ENCODE measurements at regions of chr2 and their contacts with region 1.

Region 1: DNA sequence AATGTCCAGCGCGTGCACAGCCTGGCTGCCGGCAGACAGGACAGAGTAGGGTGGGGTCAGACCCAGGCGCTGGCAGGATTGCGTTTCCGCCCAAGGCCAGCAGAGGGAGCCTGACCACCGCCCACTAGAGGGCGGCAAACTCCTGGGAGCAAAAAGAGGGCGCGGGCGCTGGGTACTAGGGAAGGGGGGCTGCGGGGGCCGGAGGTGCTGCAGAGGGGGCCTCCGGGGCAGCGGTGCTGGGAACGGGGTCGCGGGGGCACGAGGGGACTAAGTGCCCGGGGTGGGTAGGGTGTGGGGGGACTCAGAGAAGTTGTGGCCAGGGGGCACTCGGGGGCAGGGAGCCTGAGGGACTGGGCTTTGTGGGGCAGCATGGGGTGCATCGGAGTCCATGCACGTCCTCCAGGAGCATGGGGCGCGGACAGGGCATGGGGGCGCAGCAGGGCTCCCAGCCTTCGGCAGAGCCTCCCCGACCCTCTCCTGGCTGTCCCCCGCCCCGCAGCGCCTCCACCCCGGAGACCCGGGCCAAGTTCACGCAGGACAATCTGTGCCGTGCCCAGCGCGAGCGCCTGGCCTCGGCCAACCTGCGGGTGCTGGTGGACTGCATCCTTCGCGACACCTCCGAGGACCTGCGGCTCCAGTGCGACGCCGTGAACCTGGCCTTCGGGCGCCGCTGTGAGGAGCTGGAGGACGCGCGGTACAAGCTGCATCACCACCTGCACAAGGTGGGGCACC is 3.2 kb downstream of the TEKT4 start:
- DNase-seq: peak in 5 of 10 donors; percentile 21 to 48 (median 33)
- H3K4me3 ChIP-seq: no peak overlapping the region
- H3K27ac ChIP-seq: no peak overlapping the region
- H3K27me3 ChIP-seq: peaks cover 0 to 75% (median 30%) of the 10 kb centered on the region in 45 donors
- CTCF ChIP-seq: peak in 54 of 56 donors; percentile 15 to 79 (median 64)

Region 2: GRCh38 chr2:94923196-94923595 is 48.8 kb after region 1 on chr2:
- intact Hi-C with region 1: no loop called
- DNase-seq: no peak
- H3K4me3 ChIP-seq: no peak overlapping the region
- H3K27ac ChIP-seq: no peak overlapping the region
- H3K27me3 ChIP-seq: peaks cover 0 to 21% (median 0%) of the 10 kb centered on the region in 45 donors
- CTCF ChIP-seq: no peak

Region 3: DNA sequence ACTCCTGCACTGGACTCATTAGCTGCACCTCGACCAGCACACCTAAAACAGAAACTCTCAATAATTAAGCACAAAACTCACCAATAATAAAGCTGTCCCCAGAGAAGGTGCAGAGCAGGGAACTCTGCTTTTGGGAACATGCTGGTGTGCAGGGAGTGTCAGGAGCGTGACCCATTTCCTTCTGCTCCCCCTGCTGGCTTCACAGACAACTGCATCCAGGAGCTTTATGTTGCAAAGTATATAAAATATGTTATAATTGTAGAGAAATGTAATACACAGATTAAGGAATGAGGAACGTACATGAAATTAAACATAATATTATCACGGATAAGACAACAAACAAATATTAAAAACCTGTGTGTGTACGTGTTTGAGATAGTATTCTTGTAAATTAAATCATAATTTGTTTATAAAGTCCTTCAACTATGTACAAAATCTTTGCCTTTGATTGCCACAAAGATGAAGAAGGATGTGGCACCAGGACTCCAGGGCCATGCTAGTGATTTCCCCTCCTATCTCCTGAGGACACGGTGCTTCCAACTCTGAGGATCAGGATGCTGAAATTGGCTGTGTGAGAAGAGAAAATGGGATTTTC is 82.5 kb after region 1 on chr2:
- intact Hi-C with region 1: loop called in 1 of 2 experiments (anchors 10 kb)
- DNase-seq: peak in 5 of 10 donors; percentile 15 to 59 (median 49)
- H3K4me3 ChIP-seq: no peak overlapping the region
- H3K27ac ChIP-seq: no peak overlapping the region
- H3K27me3 ChIP-seq: peaks cover 0 to 28% (median 3%) of the 10 kb centered on the region in 45 donors
- CTCF ChIP-seq: peak; percentile 60 to 88 (median 77)

Measured in dorsolateral prefrontal cortex (tissue), 120 donors.